CD4-positive, alpha-beta memory T cell (primary cell): ENCODE measurements at regions of chr7 and their contacts with region 1.

Region 1: DNA sequence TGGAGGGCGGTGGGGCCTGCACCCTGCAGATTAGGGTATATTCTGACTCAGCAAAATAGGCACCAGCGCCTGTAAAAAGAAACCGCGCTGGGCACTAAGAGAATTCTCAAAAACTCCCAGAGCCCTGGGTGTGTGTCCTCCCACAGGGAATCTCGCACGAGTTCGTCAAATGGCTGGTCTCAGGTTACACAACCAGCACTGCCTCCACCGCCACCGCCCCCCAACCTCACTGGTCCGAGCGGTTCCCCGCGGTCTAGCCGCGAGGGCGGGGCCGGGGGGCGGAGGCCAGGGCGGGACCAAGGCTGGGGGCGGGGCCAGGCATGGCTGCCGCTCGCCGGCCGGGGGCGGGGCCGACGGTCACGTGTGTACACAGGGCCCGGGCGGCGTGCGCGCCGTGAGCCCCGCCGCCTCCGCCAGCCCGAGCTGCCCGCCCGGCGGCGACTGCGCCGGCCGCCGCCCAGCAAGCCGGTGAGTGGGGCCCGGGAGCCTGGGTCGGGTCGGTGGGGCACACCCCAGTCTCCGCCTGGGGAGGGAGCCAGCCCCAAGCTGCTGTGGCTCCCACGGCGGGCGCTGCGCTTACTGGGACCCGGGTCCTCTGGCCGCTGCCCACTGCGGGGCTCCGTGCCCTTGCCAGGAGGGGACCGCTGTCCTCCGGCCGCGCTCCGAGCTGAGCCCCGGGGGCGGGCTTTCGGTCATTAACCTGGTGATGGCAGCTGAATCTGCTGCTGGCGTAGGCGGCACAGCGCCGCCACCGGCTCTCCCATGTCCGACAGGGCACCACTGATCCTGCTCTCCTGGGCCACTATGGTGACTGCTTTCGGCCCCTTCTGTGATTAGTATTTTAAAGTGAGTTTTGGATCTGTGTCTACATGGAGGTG is at the start of gene GPR146:
- DNase-seq: peak; percentile 85 to 89 (median 86)
- H3K4me3 ChIP-seq: peak within 1 kb of the TSS; percentile 67 to 69
- H3K4me3 Mint-ChIP-seq: peak within 1 kb of the TSS; percentile 88 to 96 (median 92)
- H3K27ac ChIP-seq: peak within 1 kb of the TSS; percentile 55
- H3K27ac Mint-ChIP-seq: peak within 1 kb of the TSS; percentile 83 to 94 (median 91)
- H3K4me1 ChIP-seq: peaks cover 70% of the 10 kb centered on the region
- H3K4me1 Mint-ChIP-seq: peaks cover 49 to 74% (median 65%) of the 10 kb centered on the region in 4 donors
- H3K27me3 ChIP-seq: no peaks in the 10 kb centered on the region
- H3K27me3 Mint-ChIP-seq: no peaks in the 10 kb centered on the region
- total RNA-seq, gene GPR146: 8.8 to 10.1 TPM

Region 2: DNA sequence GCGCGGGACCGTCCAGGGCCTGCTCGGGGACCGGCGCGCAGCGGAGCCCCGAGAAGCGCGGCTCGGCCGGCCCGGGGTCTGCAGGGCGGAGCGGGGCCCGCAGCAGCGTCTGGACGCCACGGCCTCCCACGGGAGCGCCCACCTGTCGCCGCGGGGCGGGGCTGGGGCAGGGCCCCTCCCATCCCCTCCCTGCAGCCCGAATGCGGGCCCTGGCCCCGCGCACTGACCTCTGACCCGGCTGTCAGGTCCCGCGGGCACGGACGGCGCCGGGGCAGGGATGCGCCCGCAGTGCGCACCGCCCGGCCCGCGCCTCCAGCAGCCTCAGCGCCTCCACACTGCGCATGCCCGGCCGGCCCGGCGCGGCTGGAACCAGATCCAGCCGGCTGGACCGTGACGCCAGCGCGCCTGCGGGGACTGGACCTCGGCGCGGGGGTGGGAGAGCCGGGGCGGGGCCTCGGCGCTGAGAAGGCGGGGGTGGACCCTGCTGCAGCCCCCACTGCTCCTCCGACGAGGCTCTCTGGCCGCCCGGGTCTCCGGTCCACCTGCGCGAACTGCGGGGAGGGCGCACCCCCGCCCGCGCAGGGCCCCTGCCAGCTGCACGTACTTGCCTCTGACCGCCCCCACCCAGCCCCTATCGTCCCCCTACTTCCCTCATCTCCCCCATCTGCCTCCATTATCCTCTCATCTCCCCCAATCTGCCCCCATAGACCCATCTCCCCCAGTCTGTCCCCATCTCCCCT is 16.2 kb before region 1 on chr7:
- CTCF ChIA-PET with region 1: interaction called, 5 read pairs
- POLR2A ChIA-PET with region 1: interaction called, 20 read pairs
- intact Hi-C with region 1: loop called (anchors 2 kb)
- DNase-seq: peak; percentile 80 to 86 (median 83)
- H3K4me3 ChIP-seq: peak overlapping the region; percentile 57 to 64
- H3K4me3 Mint-ChIP-seq: peak overlapping the region; percentile 65 to 90 (median 81)
- H3K27ac ChIP-seq: peak overlapping the region; percentile 76
- H3K27ac Mint-ChIP-seq: peak overlapping the region; percentile 82 to 95 (median 91)
- H3K4me1 ChIP-seq: peaks cover 35% of the 10 kb centered on the region
- H3K4me1 Mint-ChIP-seq: peaks cover 22 to 53% (median 36%) of the 10 kb centered on the region in 4 donors
- H3K27me3 ChIP-seq: no peaks in the 10 kb centered on the region
- H3K27me3 Mint-ChIP-seq: no peaks in the 10 kb centered on the region

Region 3: GRCh38 chr7:1059200-1060091 is 15.0 kb after region 1 on chr7:
- CTCF ChIA-PET with region 1: interaction called, 16 read pairs
- POLR2A ChIA-PET with region 1: interaction called, 5 read pairs
- intact Hi-C with region 1: loop called (anchors 2 kb)
- DNase-seq: no peak
- H3K4me3 ChIP-seq: no peak overlapping the region
- H3K4me3 Mint-ChIP-seq: peak overlapping the region in 3 of 8 donors; percentile 16 to 72 (median 29)
- H3K27ac ChIP-seq: no peak overlapping the region
- H3K27ac Mint-ChIP-seq: peak overlapping the region in 6 of 7 donors; percentile 24 to 88 (median 81)
- H3K4me1 ChIP-seq: peaks cover 27% of the 10 kb centered on the region
- H3K4me1 Mint-ChIP-seq: peaks cover 11 to 45% (median 24%) of the 10 kb centered on the region in 4 donors
- H3K27me3 ChIP-seq: no peaks in the 10 kb centered on the region
- H3K27me3 Mint-ChIP-seq: no peaks in the 10 kb centered on the region